ENCODE measurements at regions of chr18 and their contacts with region 1.

Region 1: DNA sequence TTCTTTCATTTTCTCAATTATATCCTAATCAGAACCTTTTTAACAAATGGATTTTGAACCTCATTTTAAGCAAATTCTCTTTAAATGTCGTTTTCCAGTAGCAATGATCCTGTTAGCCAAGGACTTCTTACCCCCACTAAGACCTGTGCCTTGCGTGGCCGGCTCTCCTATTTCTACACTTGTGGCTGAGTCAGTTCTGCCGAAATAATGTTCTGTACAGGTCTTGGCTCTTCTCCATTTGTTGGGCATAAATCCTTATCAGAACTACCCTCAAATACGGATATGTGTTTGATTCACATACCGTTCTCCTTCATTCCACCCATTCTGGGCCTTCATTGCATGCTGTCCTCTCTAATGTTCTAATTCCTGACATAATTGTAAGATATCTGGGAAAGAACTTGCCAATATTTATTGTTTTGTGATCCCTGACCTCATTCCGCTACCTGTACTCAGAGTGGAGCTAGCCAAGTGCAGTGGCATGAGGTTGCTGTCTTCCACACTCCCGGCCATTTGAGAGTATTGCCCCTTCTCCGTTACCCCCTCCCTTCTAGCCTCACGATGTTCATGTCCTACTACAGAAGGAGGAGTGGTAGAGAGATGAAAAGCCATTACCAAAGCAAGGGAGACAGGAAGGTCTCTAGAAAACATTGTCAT is 78.7 kb downstream of the MYOM1 start:
- DNase-seq: no peak
- H3K4me3 ChIP-seq: no peak overlapping the region
- H3K27ac ChIP-seq: no peak overlapping the region
- H3K4me1 ChIP-seq: peaks cover 2% of the 10 kb centered on the region
- H3K27me3 ChIP-seq: no peaks in the 10 kb centered on the region
- CTCF ChIP-seq: no peak
- EP300 ChIP-seq: no peak
- POLR2A ChIP-seq: no peak

Region 2: GRCh38 chr18:2948038-2948437 is 193.1 kb before region 1 on chr18:
- intact Hi-C with region 1: loop called in 1 of 4 experiments (anchors 5 kb)
- DNase-seq: no peak
- H3K4me3 ChIP-seq: no peak overlapping the region
- H3K27ac ChIP-seq: no peak overlapping the region
- H3K4me1 ChIP-seq: no peaks in the 10 kb centered on the region
- H3K27me3 ChIP-seq: no peaks in the 10 kb centered on the region
- CTCF ChIP-seq: peak in 2 of 3 donors; percentile 17 to 43
- EP300 ChIP-seq: no peak
- POLR2A ChIP-seq: no peak

Region 3: DNA sequence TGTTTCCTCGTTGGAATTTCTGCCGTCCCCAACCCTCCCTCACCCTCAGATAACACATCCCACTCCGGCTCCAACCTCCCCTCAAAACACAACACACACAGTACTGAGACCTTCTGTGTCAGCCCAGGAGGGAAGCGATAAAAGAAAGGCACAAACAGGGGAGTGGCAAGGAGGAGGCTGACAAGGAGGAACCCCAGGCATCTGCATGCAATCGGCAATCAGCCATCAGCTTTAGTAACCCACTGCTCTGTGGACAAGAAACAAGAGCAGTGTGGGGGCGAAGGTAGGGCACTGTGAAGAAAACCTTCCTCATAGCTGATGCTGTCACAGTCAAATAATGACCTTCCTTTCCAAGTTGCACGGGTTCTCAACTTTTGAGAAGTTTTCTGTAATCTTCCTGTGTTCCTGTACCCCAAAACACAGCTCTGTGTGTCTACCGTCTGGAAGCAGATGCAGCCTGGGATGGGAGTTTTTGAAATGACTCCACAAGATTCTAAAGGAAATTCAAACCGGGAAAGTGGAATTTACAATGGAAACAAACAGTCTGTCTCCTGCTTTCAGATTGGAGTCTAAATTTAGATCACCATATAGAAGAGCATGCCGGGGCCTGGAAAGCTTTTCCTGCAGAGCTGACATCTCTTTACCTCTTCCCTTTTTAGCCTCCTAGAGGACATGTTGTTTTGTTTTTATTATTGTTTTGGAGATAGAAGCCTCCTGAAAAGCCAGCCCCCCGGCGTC is 111.7 kb before region 1 on chr18:
- intact Hi-C with region 1: no loop called
- DNase-seq: no peak
- H3K4me3 ChIP-seq: no peak overlapping the region
- H3K27ac ChIP-seq: peak overlapping the region in 1 of 2 donors; percentile 62
- H3K4me1 ChIP-seq: peaks cover 7% of the 10 kb centered on the region
- H3K27me3 ChIP-seq: no peaks in the 10 kb centered on the region
- CTCF ChIP-seq: no peak
- EP300 ChIP-seq: no peak
- POLR2A ChIP-seq: no peak

Region 4: DNA sequence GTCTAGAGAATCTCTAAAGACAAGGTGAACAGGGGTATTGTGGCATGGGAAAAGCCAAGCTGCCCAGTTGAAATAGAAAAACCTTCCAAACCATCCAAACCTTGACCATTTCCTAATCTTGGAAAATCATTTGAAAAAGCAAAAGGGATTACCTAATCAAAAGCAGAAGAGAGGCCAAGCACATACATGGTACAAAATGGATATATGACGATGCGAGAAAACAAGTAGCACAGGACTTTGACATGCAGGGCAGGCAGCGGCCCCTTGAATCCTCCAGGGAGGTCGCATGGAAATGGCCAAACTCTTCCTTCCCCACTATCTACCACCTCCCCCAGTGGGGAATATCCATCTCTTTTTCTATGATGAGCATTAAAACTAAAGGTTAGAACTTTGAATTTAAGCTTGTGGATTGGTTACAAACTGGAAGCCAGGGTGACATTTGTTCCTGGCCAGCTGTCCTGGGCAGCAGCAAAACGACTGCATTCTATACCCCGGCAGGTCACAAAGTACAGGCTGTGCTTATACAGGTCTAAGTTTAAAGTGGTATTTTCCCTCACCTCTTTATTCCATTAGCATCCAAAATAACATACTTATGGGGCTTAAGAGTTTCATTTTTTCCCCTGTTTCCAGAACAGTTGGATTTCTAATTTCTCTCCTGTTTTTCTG is 54.0 kb after region 1 on chr18:
- intact Hi-C with region 1: no loop called
- DNase-seq: no peak
- H3K4me3 ChIP-seq: no peak overlapping the region
- H3K27ac ChIP-seq: no peak overlapping the region
- H3K4me1 ChIP-seq: no peaks in the 10 kb centered on the region
- H3K27me3 ChIP-seq: no peaks in the 10 kb centered on the region
- CTCF ChIP-seq: no peak
- EP300 ChIP-seq: no peak
- POLR2A ChIP-seq: no peak

Measured in ovary (tissue), 10 donors.